Tibial artery (tissue), 4 donors: ENCODE measurements at regions of chr19 and their contacts with region 1.

Region 1: GRCh38 chr19:49264258-49264657 is 60.7 kb downstream of the SLC6A16 start:
- DNase-seq: no peak
- H3K4me3 ChIP-seq: no peak overlapping the region
- H3K27ac ChIP-seq: no peak overlapping the region
- H3K4me1 ChIP-seq: no peaks in the 10 kb centered on the region
- H3K27me3 ChIP-seq: peaks cover 0 to 3% of the 10 kb centered on the region in 2 donors
- CTCF ChIP-seq: no peak

Region 2: GRCh38 chr19:49340069-49340864 is 76.0 kb after region 1 on chr19:
- intact Hi-C with region 1: loop called (anchors 10 kb)
- DNase-seq: peak; percentile 80 to 97
- H3K4me3 ChIP-seq: peak overlapping the region; percentile 52 to 77
- H3K27ac ChIP-seq: peak overlapping the region; percentile 85 to 96
- H3K4me1 ChIP-seq: peaks cover 0 to 30% (median 18%) of the 10 kb centered on the region in 4 donors
- H3K27me3 ChIP-seq: no peaks in the 10 kb centered on the region
- CTCF ChIP-seq: no peak

Region 3: DNA sequence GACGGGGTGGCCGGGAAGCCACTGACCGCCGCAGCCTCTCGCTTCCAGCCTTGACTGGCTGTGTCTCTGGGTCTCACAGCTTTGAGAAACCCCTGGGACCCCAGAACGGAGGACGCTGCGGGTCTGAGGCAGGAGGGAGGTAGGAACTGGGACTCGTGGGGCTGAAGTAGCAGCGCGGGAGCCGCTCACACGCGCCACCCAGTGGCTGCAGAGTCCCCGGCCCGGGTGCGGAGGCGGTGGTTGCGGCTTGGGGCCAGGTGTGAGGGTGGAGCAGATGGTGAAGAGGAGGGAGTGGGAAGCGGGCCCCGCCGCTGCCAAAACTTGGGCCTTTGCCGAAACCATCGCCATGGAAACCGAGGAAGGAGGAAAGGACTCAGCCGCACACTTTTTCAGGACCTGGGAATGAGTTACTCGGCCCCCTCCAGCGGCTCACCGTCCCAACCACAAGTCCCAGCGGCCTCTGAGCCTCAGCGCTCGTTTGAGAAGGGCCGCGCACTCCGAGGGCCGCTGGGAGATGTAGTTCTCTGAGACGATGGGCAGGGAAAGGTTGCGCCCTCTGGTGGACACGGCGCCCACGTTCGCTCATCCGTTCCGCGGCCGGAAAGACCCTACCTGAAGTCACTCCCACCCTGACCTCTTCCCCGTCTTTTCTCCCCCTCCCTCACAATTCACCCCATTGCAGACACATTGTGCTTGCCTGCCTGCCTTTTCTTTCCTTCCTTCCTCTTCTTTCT is 179.3 kb after region 1 on chr19:
- intact Hi-C with region 1: loop called (anchors 10 kb)
- DNase-seq: peak; percentile 96 to 97
- H3K4me3 ChIP-seq: peak overlapping the region; percentile 57 to 80
- H3K27ac ChIP-seq: peak overlapping the region; percentile 74 to 77
- H3K4me1 ChIP-seq: peaks cover 0 to 21% (median 10%) of the 10 kb centered on the region in 4 donors
- H3K27me3 ChIP-seq: peaks cover 0 to 40% of the 10 kb centered on the region in 2 donors
- CTCF ChIP-seq: peak; percentile 77 to 85